Panc1 (cell line): ENCODE measurements at regions of chr15 and their contacts with region 1.

Region 1: DNA sequence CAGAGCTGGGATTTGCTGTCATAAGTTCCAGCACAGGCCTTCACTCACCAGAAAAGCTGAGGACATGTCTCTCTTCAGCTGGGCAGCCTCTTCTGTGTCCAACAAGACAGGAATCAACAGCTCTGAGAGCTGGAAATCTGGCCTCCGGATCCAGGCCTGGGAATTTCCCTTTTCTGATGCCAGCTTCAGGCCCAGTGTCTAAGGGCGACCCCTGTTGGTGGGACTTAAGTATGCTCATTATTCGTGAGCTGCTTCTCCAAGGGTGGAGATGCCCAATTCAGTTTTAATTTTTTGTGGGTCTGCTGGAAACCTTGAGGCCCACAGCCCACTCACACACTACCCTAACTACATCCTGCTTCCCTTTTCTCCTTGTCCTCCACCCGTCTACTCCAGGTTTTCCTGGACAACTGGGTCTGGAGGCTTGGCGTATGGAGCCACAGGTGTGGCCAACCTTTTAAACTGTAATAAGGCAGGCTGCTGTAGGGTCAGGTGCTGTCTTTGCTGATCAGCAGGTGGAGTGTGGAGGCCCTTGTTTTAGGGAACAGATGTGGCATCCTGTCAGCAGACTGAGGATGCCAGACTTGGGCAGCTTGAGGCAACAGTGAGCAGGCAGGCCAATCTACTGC is 2.6 kb upstream of the CEMIP start:
- DNase-seq: peak; percentile 41
- ATAC-seq: peak; percentile 46; the same call in 1 of the 2 replicates
- H3K4me3 ChIP-seq: no peak overlapping the region
- H3K27ac ChIP-seq: no peak overlapping the region; the same call in 1 of the 2 replicates
- H3K4me1 ChIP-seq: peaks cover 6% of the 10 kb centered on the region; the same call in 1 of the 2 replicates
- H3K27me3 ChIP-seq: peaks cover 21% of the 10 kb centered on the region
- CTCF ChIP-seq: peak; percentile 95

Region 2: DNA sequence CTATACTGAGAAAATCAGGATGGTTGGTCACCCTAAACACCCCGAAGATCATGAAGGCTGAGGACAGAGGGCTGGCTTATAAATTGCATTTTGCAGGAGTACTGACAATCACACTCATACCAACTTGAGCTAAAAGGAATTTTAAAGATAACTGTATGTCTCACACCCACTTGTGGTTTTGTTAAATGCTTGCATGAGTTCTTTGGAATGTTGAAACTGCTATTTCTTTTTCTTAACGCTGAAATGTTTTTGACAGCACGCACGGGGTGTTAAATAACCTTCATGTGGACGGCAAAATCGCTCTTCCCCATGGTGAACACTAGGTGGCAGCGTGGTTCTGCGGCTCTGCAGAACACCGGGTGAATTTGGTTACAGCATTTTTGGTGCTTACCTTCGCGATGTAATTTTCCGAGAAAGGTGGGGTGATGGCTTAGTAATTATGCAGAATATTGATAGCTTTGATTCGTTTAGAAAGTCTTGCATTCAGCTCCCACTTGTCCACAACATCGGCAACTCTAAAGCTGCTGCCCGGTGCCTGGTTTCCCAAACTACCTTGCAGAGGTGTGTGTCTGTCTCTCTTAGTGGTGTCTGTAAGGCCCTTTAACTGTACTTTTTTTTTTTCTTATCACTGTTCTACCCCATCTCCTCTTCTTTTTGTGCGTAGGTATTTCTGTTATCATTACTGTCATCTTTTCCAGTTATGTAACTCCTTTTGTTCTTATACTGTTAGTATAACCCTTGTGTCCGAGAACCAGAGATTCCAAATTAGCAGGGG is 320.7 kb before region 1 on chr15:
- CTCF ChIA-PET with region 1: interaction called, 9 read pairs
- POLR2A ChIA-PET with region 1: no interaction called
- in situ Hi-C with region 1: no loop called
- intact Hi-C with region 1: loop called (anchors 1 kb)
- DNase-seq: peak; percentile 53
- ATAC-seq: peak; percentile 80
- H3K4me3 ChIP-seq: no peak overlapping the region
- H3K27ac ChIP-seq: no peak overlapping the region
- H3K4me1 ChIP-seq: peaks cover 10% of the 10 kb centered on the region
- H3K27me3 ChIP-seq: 0 out of 2 replicates have a peak, but pooled peaks cover 2% of the 10 kb centered on the region
- CTCF ChIP-seq: peak; percentile 98

Region 3: DNA sequence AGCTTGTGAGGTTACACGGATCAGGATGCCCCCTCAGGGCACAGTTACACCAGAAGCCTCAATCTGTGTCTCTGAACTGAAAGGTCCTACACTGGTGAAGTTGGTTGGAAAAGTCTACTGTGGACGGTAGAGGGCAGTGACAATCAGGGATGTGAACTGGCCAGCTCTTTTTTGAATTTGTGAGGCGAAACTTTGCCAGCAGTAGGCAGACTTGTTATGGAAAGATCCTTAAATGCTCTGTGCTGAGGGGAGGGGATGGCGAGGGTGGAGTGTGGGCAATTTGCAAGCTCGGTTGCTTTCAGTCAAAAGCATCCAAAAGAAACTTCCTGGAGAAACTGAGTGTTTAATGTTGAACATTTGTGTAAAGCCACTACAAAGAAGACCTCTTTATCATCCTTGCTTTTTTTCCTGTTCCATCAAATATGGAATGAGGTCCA is 208.8 kb before region 1 on chr15:
- CTCF ChIA-PET with region 1: interaction called, 65 read pairs
- POLR2A ChIA-PET with region 1: no interaction called
- in situ Hi-C with region 1: no loop called
- intact Hi-C with region 1: loop called (anchors 1 kb)
- DNase-seq: peak; percentile 47
- ATAC-seq: peak; percentile 94
- H3K4me3 ChIP-seq: no peak overlapping the region
- H3K27ac ChIP-seq: no peak overlapping the region
- H3K4me1 ChIP-seq: no peaks in the 10 kb centered on the region
- H3K27me3 ChIP-seq: no peaks in the 10 kb centered on the region
- CTCF ChIP-seq: peak; percentile 89

Region 4: DNA sequence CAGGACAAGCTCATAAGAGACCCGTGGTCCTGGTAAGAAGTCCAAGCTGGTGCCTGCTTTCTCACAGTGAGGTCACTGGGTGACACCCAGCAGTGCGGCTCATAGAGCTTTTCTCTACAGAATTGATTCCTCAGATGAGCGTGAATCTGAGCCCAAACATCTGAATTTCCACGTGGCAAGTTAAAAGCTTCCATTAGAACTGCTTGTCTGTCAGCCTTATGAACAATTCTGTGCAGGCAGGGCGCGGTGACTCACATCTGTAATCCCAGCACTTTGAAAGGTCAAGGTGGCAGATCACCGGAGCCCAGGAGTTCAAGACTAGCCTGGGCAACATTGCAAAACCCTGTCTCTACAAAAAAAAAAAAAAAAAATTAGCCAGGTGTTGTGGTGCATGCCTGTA is 194.6 kb before region 1 on chr15:
- CTCF ChIA-PET with region 1: interaction called, 12 read pairs
- POLR2A ChIA-PET with region 1: no interaction called
- in situ Hi-C with region 1: no loop called
- intact Hi-C with region 1: no loop called
- DNase-seq: no peak
- ATAC-seq: no peak
- H3K4me3 ChIP-seq: no peak overlapping the region
- H3K27ac ChIP-seq: no peak overlapping the region
- H3K4me1 ChIP-seq: no peaks in the 10 kb centered on the region
- H3K27me3 ChIP-seq: no peaks in the 10 kb centered on the region; the same call in 1 of the 2 replicates
- CTCF ChIP-seq: no peak

Region 5: GRCh38 chr15:80619680-80620079 is 156.9 kb before region 1 on chr15:
- CTCF ChIA-PET with region 1: interaction called, 15 read pairs
- POLR2A ChIA-PET with region 1: no interaction called
- in situ Hi-C with region 1: no loop called
- intact Hi-C with region 1: no loop called
- DNase-seq: no peak
- ATAC-seq: peak; percentile 80
- H3K4me3 ChIP-seq: no peak overlapping the region
- H3K27ac ChIP-seq: no peak overlapping the region
- H3K4me1 ChIP-seq: no peaks in the 10 kb centered on the region
- H3K27me3 ChIP-seq: no peaks in the 10 kb centered on the region
- CTCF ChIP-seq: no peak

Region 6: DNA sequence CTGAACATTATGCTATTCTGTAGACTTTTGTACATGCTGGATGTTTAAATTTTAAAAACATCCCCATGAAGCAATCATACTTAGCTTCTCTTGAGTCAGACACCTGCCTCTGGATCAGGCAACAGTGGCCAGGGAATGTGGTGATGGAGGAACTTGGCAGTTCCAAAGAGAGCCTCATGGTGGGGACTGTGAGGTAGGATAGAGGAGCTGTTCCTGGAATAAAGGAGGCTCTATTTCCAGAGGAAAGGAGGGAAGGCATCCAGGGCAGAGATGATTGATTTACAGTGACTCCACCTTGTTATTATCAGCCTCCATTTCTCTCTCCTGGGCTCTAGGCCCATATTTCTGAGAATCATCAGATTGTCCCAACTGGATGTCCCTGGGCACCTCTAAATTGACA is 116.4 kb before region 1 on chr15:
- CTCF ChIA-PET with region 1: interaction called, 18 read pairs
- POLR2A ChIA-PET with region 1: no interaction called
- in situ Hi-C with region 1: no loop called
- intact Hi-C with region 1: loop called (anchors 1 kb)
- DNase-seq: no peak
- ATAC-seq: peak; percentile 90
- H3K4me3 ChIP-seq: no peak overlapping the region
- H3K27ac ChIP-seq: no peak overlapping the region
- H3K4me1 ChIP-seq: no peaks in the 10 kb centered on the region
- H3K27me3 ChIP-seq: 0 out of 2 replicates have a peak, but pooled peaks cover 2% of the 10 kb centered on the region
- CTCF ChIP-seq: peak; percentile 58

Region 7: GRCh38 chr15:80743187-80743833 is 33.2 kb before region 1 on chr15:
- CTCF ChIA-PET with region 1: no interaction called
- POLR2A ChIA-PET with region 1: no interaction called
- in situ Hi-C with region 1: no loop called
- intact Hi-C with region 1: no loop called
- DNase-seq: no peak
- ATAC-seq: peak; percentile 97
- H3K4me3 ChIP-seq: no peak overlapping the region
- H3K27ac ChIP-seq: peak overlapping the region; percentile 73; the same call in 1 of the 2 replicates
- H3K4me1 ChIP-seq: peaks cover 24% of the 10 kb centered on the region
- H3K27me3 ChIP-seq: no peaks in the 10 kb centered on the region
- CTCF ChIP-seq: no peak

Region 8: DNA sequence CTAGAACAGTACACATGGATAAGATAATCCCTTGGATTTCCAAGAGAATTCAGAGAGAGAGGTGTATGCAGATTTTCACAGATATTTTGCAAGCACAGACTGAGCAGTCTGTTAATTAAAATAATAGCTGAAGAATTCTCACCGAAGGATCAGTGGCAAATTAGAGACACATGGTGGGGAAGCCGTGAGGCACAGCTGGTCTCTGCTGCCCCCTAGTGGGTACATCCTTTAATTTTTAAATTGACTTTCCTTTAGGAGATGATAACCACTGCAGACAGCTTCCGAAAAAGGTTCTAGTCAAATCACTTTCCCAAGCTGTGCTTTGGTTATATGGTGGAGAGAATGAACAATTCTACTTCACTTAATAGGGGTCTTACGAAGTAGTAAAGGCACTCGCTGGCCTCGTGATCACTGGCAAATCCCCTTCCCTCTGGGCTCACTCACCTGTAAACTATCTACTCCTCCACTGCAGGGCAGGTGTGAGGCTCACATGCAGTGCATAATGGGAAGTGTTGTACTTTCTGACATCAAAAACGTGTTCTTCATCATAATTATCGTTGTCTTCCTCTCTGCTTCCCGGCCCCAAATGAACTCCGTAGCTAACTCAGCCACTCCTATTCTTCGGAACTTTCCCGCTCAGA is 193.6 kb after region 1 on chr15:
- CTCF ChIA-PET with region 1: interaction called, 8 read pairs
- POLR2A ChIA-PET with region 1: no interaction called
- in situ Hi-C with region 1: no loop called
- intact Hi-C with region 1: loop called (anchors 2 kb)
- DNase-seq: no peak
- ATAC-seq: peak; percentile 85
- H3K4me3 ChIP-seq: no peak overlapping the region
- H3K27ac ChIP-seq: no peak overlapping the region
- H3K4me1 ChIP-seq: no peaks in the 10 kb centered on the region
- H3K27me3 ChIP-seq: no peaks in the 10 kb centered on the region
- CTCF ChIP-seq: peak; percentile 92